ENCODE measurements at regions of chr5 and their contacts with region 1.

Region 1: GRCh38 chr5:163437309-163438182 is at the start of gene CCNG1:
- DNase-seq: peak; percentile 93
- H3K4me3 Mint-ChIP-seq: peak within 1 kb of the TSS; percentile 86
- H3K27ac Mint-ChIP-seq: peak within 1 kb of the TSS; percentile 76
- H3K4me1 Mint-ChIP-seq: peaks cover 47% of the 10 kb centered on the region
- H3K27me3 Mint-ChIP-seq: peaks cover 5% of the 10 kb centered on the region
- total RNA-seq, gene CCNG1: 143 to 154 TPM

Region 2: DNA sequence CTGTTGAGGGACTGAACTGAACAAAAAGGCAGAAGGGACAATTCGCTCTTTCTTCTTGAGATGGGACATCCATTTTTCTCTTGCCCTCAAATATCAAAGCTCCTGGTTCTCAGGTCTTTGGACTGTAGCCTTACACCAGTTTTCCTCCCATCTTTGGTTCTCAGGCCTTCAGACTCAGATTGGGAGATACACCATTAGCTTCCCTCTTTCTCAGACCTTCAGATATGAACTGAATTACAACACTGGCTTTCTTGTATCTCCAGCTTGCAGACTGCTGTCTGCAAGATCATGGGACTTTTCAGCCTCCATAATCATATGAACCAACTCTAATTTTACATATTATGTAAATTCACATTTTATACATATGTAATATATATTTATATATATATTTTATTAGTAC is 12.7 kb before region 1 on chr5:
- CTCF ChIA-PET with region 1: no interaction called
- POLR2A ChIA-PET with region 1: no interaction called
- DNase-seq: no peak
- H3K4me3 Mint-ChIP-seq: no peak overlapping the region
- H3K27ac Mint-ChIP-seq: no peak overlapping the region
- H3K4me1 Mint-ChIP-seq: peaks cover 6% of the 10 kb centered on the region
- H3K27me3 Mint-ChIP-seq: peaks cover 9% of the 10 kb centered on the region

Region 3: DNA sequence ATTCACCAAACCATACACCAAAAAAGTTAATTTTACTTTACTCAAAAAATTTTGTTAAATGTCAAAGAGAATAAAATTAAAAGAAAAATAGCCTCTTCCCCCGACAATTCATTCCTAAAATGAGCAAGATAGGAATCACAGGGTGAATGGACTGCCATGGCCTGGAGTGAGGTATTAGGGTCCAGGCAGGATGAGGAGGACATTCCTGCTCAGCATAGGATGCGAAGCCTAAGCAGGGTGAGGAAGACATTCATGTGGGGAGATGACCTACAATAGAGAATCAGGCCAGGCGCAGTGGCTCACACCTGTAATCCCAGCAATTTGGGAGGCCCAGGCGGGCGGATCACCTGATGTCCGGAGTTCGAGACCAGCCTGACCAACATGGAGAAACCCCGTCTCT is 13.9 kb after region 1 on chr5:
- CTCF ChIA-PET with region 1: interaction called, 4 read pairs
- POLR2A ChIA-PET with region 1: interaction called, 385 read pairs
- DNase-seq: no peak
- H3K4me3 Mint-ChIP-seq: no peak overlapping the region
- H3K27ac Mint-ChIP-seq: no peak overlapping the region
- H3K4me1 Mint-ChIP-seq: peaks cover 23% of the 10 kb centered on the region
- H3K27me3 Mint-ChIP-seq: no peaks in the 10 kb centered on the region

Region 4: DNA sequence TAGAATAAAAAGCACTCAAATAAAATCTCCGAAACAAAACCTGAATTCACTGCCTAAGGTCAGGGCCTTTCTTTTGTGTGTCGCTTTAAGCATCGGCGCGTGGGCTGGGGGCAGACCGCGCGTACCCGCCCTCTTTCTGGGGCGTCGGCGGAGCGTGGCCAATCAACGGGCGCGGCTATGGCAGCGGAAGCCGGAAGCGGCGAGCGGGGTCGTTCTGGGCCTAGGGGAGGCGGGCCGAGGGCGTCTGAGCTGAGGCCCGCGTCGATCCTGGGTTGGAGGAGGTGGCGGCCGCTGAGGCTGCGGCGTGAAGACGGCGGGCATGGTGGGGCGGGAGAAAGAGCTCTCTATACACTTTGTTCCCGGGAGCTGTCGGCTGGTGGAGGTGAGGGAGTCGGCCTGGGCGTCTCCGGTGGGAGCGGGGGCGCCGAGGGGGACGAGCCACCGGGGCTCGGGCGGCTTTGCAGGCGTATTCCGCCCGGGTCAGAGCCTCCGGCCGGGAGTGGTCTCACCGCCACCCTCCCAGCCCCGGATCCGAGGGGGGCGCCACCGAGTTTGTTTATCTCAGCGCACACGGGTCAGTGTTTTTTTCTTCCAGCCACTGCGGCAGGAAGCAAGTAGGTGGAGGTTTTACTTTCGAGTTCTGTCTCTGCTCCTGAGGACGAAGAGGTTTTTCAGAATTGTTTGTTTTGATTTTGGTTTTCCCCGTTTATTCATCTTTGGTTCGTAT is 68.0 kb after region 1 on chr5 and contains the start of gene MAT2B:
- CTCF ChIA-PET with region 1: interaction called, 4 read pairs
- POLR2A ChIA-PET with region 1: interaction called, 29 read pairs
- DNase-seq: peak; percentile 96
- H3K4me3 Mint-ChIP-seq: peak within 1 kb of the TSS; percentile 96
- H3K27ac Mint-ChIP-seq: peak within 1 kb of the TSS; percentile 99
- H3K4me1 Mint-ChIP-seq: peaks cover 36% of the 10 kb centered on the region
- H3K27me3 Mint-ChIP-seq: no peaks in the 10 kb centered on the region
- total RNA-seq, gene MAT2B: 112 to 119 TPM

Measured in activated CD4-positive, alpha-beta memory T cell treated with anti-CD3 and anti-CD28 coated beads, Interleukin-2, amount 10 ng/mL, durations not matched to agents 7 days and 5 days (primary cell).